ENCODE measurements at regions of chr7 and their contacts with region 1.

Region 1: GRCh38 chr7:19708397-19709248 is at the start of gene POLR1F:
- H3K4me3 Mint-ChIP-seq: peak within 1 kb of the TSS; percentile 88
- H3K27ac Mint-ChIP-seq: peak within 1 kb of the TSS; percentile 94
- H3K4me1 Mint-ChIP-seq: peaks cover 35% of the 10 kb centered on the region
- H3K27me3 Mint-ChIP-seq: peaks cover 2% of the 10 kb centered on the region

Region 2: GRCh38 chr7:19489162-19489820 is 219.3 kb before region 1 on chr7:
- intact Hi-C with region 1: no loop called
- H3K4me3 Mint-ChIP-seq: no peak overlapping the region
- H3K27ac Mint-ChIP-seq: no peak overlapping the region
- H3K4me1 Mint-ChIP-seq: no peaks in the 10 kb centered on the region
- H3K27me3 Mint-ChIP-seq: no peaks in the 10 kb centered on the region

Region 3: GRCh38 chr7:20114468-20114867 is 405.8 kb after region 1 on chr7:
- intact Hi-C with region 1: loop called (anchors 10 kb)
- H3K4me3 Mint-ChIP-seq: no peak overlapping the region
- H3K27ac Mint-ChIP-seq: no peak overlapping the region
- H3K4me1 Mint-ChIP-seq: peaks cover 16% of the 10 kb centered on the region
- H3K27me3 Mint-ChIP-seq: no peaks in the 10 kb centered on the region

Measured in dendritic cell treated with granulocyte-macrophage colony-stimulating factor and Interleukin-4, amounts not matched to agents 40 ng/mL and 50 ng/mL, for 4 days (primary cell).